Caco-2 (cell line): ENCODE measurements at regions of chr3 and their contacts with region 1.

Region 1: DNA sequence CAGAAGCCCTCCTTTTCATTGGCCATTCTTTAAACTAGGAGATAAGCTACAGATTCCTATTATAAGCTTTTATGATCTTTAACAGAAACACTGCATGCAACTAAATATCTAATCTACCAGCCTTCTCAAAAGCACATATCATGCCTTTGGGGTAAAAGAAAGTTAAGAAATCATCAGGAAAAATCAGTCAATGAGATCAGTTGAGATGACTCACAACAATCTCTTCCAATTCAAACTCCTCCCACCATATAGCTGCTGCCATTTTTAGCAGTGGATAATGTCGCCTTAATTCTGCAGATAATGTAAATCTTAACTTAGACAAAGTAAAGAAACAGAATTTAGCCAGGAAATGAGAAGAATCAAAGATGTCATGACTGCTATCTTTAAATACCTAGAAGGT is 135.2 kb upstream of the BCL6 start:
- DNase-seq: no peak
- H3K4me3 ChIP-seq: no peak overlapping the region
- H3K4me3 Mint-ChIP-seq: no peak overlapping the region
- H3K27ac Mint-ChIP-seq: no peak overlapping the region
- H3K4me1 ChIP-seq: peaks cover 10% of the 10 kb centered on the region
- H3K4me1 Mint-ChIP-seq: peaks cover 6% of the 10 kb centered on the region
- H3K27me3 ChIP-seq: no peaks in the 10 kb centered on the region
- H3K27me3 Mint-ChIP-seq: no peaks in the 10 kb centered on the region
- CTCF ChIP-seq: no peak

Region 2: GRCh38 chr3:187935623-187936156 is 55.3 kb after region 1 on chr3:
- CTCF ChIA-PET with region 1: no interaction called
- POLR2A ChIA-PET with region 1: no interaction called
- intact Hi-C with region 1: no loop called
- DNase-seq: no peak
- H3K4me3 ChIP-seq: no peak overlapping the region
- H3K4me3 Mint-ChIP-seq: no peak overlapping the region
- H3K27ac Mint-ChIP-seq: no peak overlapping the region
- H3K4me1 ChIP-seq: no peaks in the 10 kb centered on the region
- H3K4me1 Mint-ChIP-seq: no peaks in the 10 kb centered on the region
- H3K27me3 ChIP-seq: no peaks in the 10 kb centered on the region
- H3K27me3 Mint-ChIP-seq: no peaks in the 10 kb centered on the region
- CTCF ChIP-seq: no peak

Region 3: GRCh38 chr3:187986514-187986934 is 106.1 kb after region 1 on chr3:
- CTCF ChIA-PET with region 1: no interaction called
- POLR2A ChIA-PET with region 1: no interaction called
- intact Hi-C with region 1: no loop called
- DNase-seq: no peak
- H3K4me3 ChIP-seq: no peak overlapping the region
- H3K4me3 Mint-ChIP-seq: no peak overlapping the region
- H3K27ac Mint-ChIP-seq: no peak overlapping the region
- H3K4me1 ChIP-seq: peaks cover 20% of the 10 kb centered on the region
- H3K4me1 Mint-ChIP-seq: peaks cover 21% of the 10 kb centered on the region
- H3K27me3 ChIP-seq: no peaks in the 10 kb centered on the region
- H3K27me3 Mint-ChIP-seq: no peaks in the 10 kb centered on the region
- CTCF ChIP-seq: no peak

Region 4: GRCh38 chr3:188294823-188295487 is 414.5 kb after region 1 on chr3:
- CTCF ChIA-PET with region 1: no interaction called
- POLR2A ChIA-PET with region 1: interaction called, 10 read pairs
- intact Hi-C with region 1: no loop called
- DNase-seq: peak; percentile 46 to 53
- H3K4me3 ChIP-seq: no peak overlapping the region
- H3K4me3 Mint-ChIP-seq: peak overlapping the region; percentile 53
- H3K27ac Mint-ChIP-seq: peak overlapping the region; percentile 78
- H3K4me1 ChIP-seq: peaks cover 57% of the 10 kb centered on the region
- H3K4me1 Mint-ChIP-seq: peaks cover 68% of the 10 kb centered on the region
- H3K27me3 ChIP-seq: no peaks in the 10 kb centered on the region
- H3K27me3 Mint-ChIP-seq: no peaks in the 10 kb centered on the region
- CTCF ChIP-seq: no peak

Region 5: DNA sequence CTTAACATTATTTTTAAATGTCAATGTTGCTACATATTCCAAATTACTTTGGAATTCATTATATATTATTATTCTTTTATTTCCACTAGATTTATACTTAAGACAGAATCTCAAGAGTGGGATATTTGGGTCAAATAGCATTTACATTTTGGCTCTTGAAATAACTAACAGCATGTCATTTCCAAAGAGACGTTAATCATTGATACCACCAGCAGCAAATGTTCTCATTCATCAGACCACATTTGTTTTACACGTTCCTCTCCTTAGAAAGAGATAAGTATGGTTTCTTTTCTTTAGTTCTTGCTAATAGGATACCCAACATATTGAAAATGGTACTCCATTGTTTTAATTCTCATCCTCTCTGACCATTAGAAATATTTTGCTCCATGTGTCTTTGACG is 503.3 kb after region 1 on chr3:
- CTCF ChIA-PET with region 1: no interaction called
- POLR2A ChIA-PET with region 1: no interaction called
- intact Hi-C with region 1: no loop called
- DNase-seq: no peak
- H3K4me3 ChIP-seq: no peak overlapping the region
- H3K4me3 Mint-ChIP-seq: no peak overlapping the region
- H3K27ac Mint-ChIP-seq: no peak overlapping the region
- H3K4me1 ChIP-seq: peaks cover 37% of the 10 kb centered on the region
- H3K4me1 Mint-ChIP-seq: peaks cover 44% of the 10 kb centered on the region
- H3K27me3 ChIP-seq: no peaks in the 10 kb centered on the region
- H3K27me3 Mint-ChIP-seq: no peaks in the 10 kb centered on the region
- CTCF ChIP-seq: no peak